Thyroid gland (tissue), 4 donors: ENCODE measurements at regions of chr5 and their contacts with region 1.

Region 1: GRCh38 chr5:128201065-128201926 is 117.7 kb downstream of the SLC12A2 start:
- DNase-seq: peak; percentile 85 to 91
- H3K4me3 ChIP-seq: peak overlapping the region in 1 of 3 donors; percentile 12
- H3K27ac ChIP-seq: no peak overlapping the region
- H3K4me1 ChIP-seq: peaks cover 0 to 19% of the 10 kb centered on the region in 2 donors
- H3K27me3 ChIP-seq: no peaks in the 10 kb centered on the region
- CTCF ChIP-seq: peak; percentile 67 to 96 (median 81)
- POLR2A ChIP-seq: no peak

Region 2: DNA sequence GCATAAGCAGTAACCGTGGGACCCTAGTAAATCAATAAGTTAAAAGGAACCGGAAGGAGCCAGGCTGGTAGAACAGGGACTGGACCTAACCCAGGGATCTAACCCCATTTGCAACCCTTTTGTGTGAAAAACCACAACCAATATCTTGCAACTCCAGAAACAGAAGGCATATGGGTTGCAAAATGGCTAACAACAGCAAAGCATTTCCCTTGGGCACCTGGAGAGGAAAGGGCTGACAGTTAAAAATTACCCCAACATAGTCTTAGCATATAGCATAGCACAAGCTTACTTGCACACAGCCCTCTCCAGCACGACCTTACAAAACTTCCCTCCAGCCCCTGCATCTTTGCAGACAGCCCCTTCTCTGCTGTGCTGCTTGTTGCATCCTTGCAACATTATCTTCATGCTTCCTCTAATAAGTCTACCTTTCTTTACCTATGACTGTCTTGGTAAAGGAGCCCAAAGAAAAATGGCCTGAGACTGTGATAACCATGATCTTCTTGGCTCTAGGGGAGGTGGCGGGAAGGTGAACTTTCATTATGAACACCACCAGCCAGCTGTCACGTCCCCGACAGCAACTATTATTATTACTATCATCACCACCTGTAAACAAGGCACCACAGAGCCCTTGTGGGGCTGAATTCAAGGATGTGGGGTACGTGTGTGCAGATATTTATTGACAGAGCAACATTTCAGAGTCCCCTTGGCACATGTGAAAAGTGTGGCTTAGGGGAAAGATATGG is 634.1 kb before region 1 on chr5:
- intact Hi-C with region 1: loop called (anchors 5 kb)
- DNase-seq: no peak
- H3K4me3 ChIP-seq: no peak overlapping the region
- H3K27ac ChIP-seq: no peak overlapping the region
- H3K4me1 ChIP-seq: no peaks in the 10 kb centered on the region
- H3K27me3 ChIP-seq: no peaks in the 10 kb centered on the region
- CTCF ChIP-seq: no peak
- POLR2A ChIP-seq: no peak

Region 3: DNA sequence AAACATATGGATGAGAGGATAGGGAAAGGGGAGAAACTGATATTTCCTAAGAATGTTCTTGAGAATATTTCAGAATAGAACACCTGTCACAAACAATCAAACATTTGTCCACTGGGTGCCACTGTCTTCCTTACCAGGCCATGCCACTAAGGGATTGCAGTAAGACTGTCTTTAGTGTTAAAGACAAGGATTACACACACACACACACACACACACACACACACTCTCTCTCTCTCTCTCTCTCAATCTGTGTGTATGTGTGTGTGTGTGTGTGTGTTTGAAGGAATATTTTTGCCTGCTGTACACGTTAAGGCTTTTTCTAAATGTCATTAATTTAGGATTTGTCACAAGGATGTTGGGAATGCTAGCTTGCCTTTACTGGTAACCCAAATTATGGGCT is 443.7 kb before region 1 on chr5:
- intact Hi-C with region 1: loop called (anchors 10 kb)
- DNase-seq: peak in 1 of 2 donors; percentile 8
- H3K4me3 ChIP-seq: no peak overlapping the region
- H3K27ac ChIP-seq: no peak overlapping the region
- H3K4me1 ChIP-seq: no peaks in the 10 kb centered on the region
- H3K27me3 ChIP-seq: no peaks in the 10 kb centered on the region
- CTCF ChIP-seq: peak in 3 of 6 experiments; percentile 33 to 49 (median 37)
- POLR2A ChIP-seq: no peak

Region 4: DNA sequence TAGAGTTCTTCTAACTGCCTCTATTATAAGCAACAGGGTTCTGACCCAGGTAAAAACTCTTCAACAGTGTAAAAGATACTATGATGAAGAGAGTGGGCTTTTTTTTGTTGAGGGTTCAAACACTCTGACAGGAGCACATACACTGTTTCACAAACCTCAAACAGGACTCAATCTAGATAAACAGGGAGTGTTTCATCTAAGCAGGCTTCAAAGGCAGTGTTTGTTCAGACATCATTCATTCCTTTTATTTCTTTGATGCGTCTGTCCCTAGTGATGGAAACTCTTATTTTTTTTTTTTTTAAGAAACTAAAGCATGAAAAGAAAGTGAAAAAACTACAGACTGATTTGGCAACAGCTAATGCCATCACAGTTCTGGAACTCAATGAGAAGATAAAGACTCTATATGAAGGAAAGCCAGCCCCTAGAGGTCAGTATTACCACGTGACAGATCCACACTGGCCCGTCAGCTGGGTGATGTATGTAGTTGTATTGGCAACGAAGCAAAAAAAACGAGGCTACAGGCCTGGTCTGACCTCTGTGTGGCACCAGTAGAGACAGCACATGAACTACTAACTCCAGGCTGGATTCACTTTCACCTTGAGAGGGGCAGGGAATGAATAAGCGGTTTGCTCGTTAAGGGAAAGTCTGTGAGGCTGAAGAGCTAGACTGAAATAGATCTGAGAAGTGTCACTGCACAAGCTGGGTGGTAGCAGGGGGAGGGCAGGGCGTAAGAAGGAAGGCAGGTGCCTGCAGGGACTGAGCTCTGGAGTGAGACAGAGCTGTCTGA is 325.9 kb before region 1 on chr5:
- intact Hi-C with region 1: loop called (anchors 10 kb)
- DNase-seq: peak; percentile 39 to 56
- H3K4me3 ChIP-seq: no peak overlapping the region
- H3K27ac ChIP-seq: no peak overlapping the region
- H3K4me1 ChIP-seq: peaks cover 0 to 11% of the 10 kb centered on the region in 2 donors
- H3K27me3 ChIP-seq: no peaks in the 10 kb centered on the region
- CTCF ChIP-seq: peak in 3 of 6 experiments; percentile 13 to 35 (median 30)
- POLR2A ChIP-seq: no peak